Activated CD8-positive, alpha-beta T cell treated with anti-CD3 and anti-CD28 coated beads, Interleukin-2, amount 10 ng/mL, durations not matched to agents 7 days and 5 days (primary cell): ENCODE measurements at regions of chr2 and their contacts with region 1.

Region 1: GRCh38 chr2:240586198-240586918 is at the start of gene CAPN10:
- DNase-seq: peak; percentile 98
- ATAC-seq: peak; percentile 91
- H3K4me3 Mint-ChIP-seq: peak within 1 kb of the TSS; percentile 97
- H3K27ac Mint-ChIP-seq: peak within 1 kb of the TSS; percentile 92
- H3K4me1 Mint-ChIP-seq: peaks cover 47% of the 10 kb centered on the region
- H3K27me3 Mint-ChIP-seq: no peaks in the 10 kb centered on the region
- total RNA-seq, gene CAPN10: 53.0 to 61.2 TPM

Region 2: GRCh38 chr2:240528406-240529040 is 57.8 kb before region 1 on chr2:
- CTCF ChIA-PET with region 1: no interaction called
- POLR2A ChIA-PET with region 1: no interaction called
- DNase-seq: peak; percentile 14
- ATAC-seq: no peak
- H3K4me3 Mint-ChIP-seq: no peak overlapping the region
- H3K27ac Mint-ChIP-seq: no peak overlapping the region
- H3K4me1 Mint-ChIP-seq: no peaks in the 10 kb centered on the region
- H3K27me3 Mint-ChIP-seq: no peaks in the 10 kb centered on the region

Region 3: DNA sequence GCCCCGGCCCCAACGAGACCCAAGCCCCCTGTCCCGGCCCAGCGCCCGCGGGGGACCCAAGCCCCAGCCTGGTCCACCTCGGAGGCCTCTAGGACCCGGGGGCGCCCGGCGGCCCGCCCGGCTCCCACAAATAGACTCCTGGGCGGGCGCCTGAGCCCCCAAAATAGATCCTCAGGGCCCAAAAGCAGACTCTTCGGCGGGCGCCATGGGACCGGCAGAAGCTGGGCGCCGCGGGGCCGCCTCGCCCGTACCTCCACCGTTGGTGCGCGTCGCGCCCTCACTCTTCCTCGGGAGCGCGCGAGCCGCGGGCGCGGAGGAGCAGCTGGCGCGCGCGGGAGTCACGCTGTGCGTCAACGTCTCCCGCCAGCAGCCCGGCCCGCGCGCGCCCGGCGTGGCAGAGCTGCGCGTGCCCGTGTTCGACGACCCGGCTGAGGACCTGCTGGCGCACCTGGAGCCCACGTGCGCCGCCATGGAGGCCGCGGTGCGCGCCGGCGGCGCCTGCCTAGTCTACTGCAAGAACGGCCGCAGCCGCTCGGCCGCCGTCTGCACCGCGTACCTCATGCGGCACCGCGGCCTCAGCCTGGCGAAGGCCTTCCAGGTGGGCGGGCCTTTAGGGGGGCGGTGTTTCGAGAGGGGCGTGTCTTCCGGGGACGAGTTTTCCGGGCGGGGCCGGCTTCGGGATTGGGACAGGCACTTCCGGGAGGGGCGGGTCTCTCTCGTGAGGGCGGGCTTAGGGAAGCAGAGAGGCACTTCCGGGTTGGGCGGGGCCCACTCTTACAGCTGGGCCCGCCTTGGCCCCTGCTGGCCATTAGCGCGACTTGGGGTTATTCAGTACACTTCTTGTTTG is 25.7 kb before region 1 on chr2:
- CTCF ChIA-PET with region 1: interaction called, 119 read pairs
- POLR2A ChIA-PET with region 1: interaction called, 53 read pairs
- DNase-seq: peak; percentile 100
- ATAC-seq: peak; percentile 61
- H3K4me3 Mint-ChIP-seq: peak overlapping the region; percentile 85
- H3K27ac Mint-ChIP-seq: peak overlapping the region; percentile 81
- H3K4me1 Mint-ChIP-seq: peaks cover 77% of the 10 kb centered on the region
- H3K27me3 Mint-ChIP-seq: no peaks in the 10 kb centered on the region

Region 4: GRCh38 chr2:240611601-240612210 is 25.3 kb after region 1 on chr2:
- CTCF ChIA-PET with region 1: interaction called, 15 read pairs
- POLR2A ChIA-PET with region 1: no interaction called
- DNase-seq: peak; percentile 67
- ATAC-seq: peak; percentile 28
- H3K4me3 Mint-ChIP-seq: no peak overlapping the region
- H3K27ac Mint-ChIP-seq: no peak overlapping the region
- H3K4me1 Mint-ChIP-seq: peaks cover 18% of the 10 kb centered on the region
- H3K27me3 Mint-ChIP-seq: no peaks in the 10 kb centered on the region